Activated T-helper 1 cell treated with anti-CD3 and anti-CD28 coated beads, Interleukin-12 subunit alpha, Interleukin-12 subunit beta, Interleukin-2, Interleukin-4 antibody, amounts not matched to agents 30 ng/mL and 10 ng/mL and 1 ng/mL, durations not matched to agents 14 hours and 24 hours and 36 hours (primary cell): ENCODE measurements at regions of chr18 and their contacts with region 1.

Region 1: DNA sequence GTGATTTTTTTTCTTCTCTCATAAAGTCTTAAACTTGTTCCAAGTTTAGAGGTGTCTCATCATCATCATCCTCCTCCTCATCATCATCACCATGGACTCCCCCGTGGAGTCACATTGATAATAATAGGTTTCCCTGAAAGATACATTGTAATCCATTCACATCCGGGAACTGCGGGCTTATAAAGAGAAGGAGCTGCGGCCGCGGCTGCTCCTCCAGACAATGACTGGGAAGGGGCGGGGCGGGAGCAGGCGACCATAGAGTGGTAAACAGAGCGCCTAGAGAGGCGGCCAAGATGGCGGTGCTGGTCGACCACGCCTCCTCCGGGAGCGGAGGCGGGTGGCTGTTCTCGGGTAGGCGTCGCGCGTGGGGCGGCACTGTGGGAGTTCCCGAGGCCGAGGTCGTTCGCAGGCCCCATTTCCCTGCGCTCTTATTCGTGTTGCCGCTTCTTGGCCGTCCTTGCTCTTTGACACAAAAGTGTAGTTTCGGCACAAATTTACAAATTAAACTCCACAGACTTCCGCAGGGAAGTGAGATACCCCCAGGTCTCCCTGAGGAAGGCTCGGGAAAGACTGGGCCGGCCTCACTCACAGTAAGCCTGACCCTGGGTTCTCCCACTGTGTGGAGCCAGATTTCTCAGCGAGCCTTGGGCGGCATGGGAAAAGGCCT is 1.8 kb upstream of the TCF4 start:
- DNase-seq: peak; percentile 81
- H3K4me3 Mint-ChIP-seq: peak overlapping the region; percentile 83
- H3K27ac Mint-ChIP-seq: peak overlapping the region; percentile 76
- H3K4me1 Mint-ChIP-seq: peaks cover 35% of the 10 kb centered on the region
- H3K27me3 Mint-ChIP-seq: peaks cover 31% of the 10 kb centered on the region

Region 2: GRCh38 chr18:55234366-55235093 is 355.2 kb before region 1 on chr18:
- intact Hi-C with region 1: loop called (anchors 10 kb)
- DNase-seq: peak; percentile 41
- H3K4me3 Mint-ChIP-seq: no peak overlapping the region
- H3K27ac Mint-ChIP-seq: no peak overlapping the region
- H3K4me1 Mint-ChIP-seq: peaks cover 5% of the 10 kb centered on the region
- H3K27me3 Mint-ChIP-seq: no peaks in the 10 kb centered on the region

Region 3: DNA sequence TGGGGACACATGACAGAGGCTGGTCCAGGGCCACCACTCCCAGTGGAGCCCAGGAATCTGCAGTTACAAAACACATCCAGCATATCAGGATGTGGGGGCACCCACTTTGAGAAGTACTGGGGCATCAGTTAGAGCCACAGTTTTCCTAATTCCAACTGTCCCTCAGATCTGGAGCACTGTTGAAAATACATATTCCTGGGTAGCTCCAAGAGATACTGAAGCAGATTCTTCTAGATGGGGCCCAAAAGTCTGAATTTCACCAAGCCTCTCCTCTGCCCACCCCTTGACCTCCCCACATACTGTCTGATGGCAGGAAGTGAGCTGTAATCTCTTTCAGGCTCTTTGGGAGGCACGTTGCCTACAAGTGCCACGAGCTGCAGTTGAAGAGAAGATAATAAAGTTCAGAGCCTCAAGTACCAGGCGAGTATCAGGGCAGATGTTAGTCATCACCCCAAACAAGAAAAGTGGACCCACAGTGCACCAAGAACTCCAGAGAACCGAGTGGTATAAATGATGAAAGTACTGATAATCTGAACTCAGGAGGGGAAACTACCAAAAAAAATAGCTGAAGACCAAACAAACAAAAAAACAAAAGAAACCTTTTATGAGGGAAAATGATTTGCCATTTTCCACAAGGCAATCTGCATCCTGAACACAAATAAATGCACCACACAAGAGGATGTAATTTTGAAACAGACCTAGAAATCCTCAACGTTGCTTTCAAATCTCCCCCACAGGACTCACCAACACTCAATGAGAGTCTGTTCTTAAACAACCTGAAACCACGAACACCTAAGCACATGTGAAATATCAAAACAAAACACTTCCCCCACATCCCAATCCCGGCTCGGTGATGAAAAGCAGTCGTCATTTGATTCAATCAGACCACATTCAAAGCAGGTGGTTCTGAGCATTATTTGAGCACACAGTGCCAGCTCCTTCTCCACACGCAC is 100.4 kb before region 1 on chr18:
- intact Hi-C with region 1: loop called (anchors 1 kb)
- DNase-seq: no peak
- H3K4me3 Mint-ChIP-seq: no peak overlapping the region
- H3K27ac Mint-ChIP-seq: peak overlapping the region; percentile 41
- H3K4me1 Mint-ChIP-seq: peaks cover 9% of the 10 kb centered on the region
- H3K27me3 Mint-ChIP-seq: peaks cover 23% of the 10 kb centered on the region

Region 4: GRCh38 chr18:55522011-55522410 is 67.7 kb before region 1 on chr18:
- intact Hi-C with region 1: no loop called
- DNase-seq: no peak
- H3K4me3 Mint-ChIP-seq: no peak overlapping the region
- H3K27ac Mint-ChIP-seq: no peak overlapping the region
- H3K4me1 Mint-ChIP-seq: no peaks in the 10 kb centered on the region
- H3K27me3 Mint-ChIP-seq: peaks cover 5% of the 10 kb centered on the region

Region 5: DNA sequence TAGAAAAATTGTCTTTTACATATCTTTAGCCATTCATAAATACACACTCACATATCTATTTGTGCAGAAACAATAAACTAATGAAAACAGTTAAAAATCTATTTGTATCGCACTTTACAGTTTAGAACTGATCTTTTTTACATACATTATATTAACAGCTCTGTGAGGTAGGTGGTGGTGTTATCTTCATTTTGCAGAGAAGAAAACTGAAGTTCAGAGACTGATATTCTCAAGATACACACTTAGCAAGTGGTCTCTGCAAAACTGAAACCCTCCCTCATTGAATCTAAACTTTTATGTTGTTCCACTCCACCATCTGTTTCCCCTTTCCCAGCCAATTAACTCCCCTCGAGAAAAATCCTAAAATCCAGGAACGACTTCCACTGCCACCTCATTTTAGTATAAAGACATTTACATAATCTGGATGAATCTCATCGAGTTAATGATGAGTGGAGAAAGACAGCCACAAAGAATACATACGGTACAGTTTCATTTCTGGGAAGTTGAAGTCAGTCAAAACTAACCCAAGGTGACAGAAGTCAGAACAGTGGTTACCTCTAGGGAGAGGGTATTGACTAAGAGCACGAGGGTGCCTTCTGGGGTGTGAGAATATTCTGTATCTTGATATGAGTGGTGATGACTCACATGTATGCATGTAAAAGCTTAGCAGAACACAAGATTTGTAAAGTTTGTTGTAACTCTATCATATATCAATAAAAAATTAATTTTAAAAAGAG is 522.4 kb after region 1 on chr18:
- intact Hi-C with region 1: loop called (anchors 10 kb)
- DNase-seq: peak; percentile 1
- H3K4me3 Mint-ChIP-seq: no peak overlapping the region
- H3K27ac Mint-ChIP-seq: peak overlapping the region; percentile 20
- H3K4me1 Mint-ChIP-seq: peaks cover 13% of the 10 kb centered on the region
- H3K27me3 Mint-ChIP-seq: peaks cover 4% of the 10 kb centered on the region

Region 6: DNA sequence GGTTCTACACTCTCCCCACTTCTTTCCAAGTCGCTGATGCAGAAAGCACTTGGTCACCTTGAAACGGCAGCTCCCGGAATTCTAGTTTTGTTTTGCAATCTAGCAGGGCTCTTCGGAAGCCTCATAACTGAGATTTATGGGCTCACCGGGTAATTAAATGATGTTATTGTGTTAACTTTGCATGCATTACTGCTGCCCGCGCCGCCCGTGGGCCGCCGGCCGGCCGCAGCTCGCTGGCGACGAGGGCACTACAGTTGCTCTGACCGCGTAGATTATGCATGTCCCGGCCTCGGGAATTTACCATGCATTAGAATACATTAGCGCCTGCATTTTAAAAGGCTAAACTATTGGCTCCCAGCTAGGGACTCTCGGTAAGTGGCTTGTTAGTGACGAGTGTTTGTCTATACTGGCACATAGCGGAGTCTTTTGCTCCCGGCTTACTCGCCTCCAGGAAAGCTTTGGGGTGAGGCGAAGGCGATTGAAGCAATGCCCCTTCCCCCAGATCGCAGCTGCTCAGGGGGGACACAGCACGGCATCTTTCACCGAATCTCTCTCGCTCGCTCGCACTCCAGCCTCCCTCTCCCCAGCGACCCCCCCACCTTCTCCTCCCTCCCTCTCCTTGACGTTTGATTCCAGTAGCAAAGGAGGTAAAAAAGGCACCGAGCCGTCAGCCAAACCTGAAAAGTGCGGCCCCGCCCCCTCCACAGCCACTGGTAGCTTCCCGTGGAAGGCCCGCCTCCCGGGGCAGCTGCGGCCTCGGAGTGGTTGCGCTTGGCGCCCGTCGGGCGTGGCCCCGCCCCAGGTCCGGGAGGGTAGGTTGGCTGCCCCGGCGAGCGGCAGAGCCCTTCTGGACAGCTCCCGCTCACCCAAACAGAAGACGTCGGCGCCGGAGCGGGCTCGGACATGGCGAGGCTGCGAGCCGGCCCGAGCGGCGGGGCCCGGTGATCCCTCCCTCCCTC is 1845.1 kb after region 1 on chr18 and contains the start of gene ONECUT2:
- intact Hi-C with region 1: loop called (anchors 10 kb)
- DNase-seq: peak; percentile 23
- H3K4me3 Mint-ChIP-seq: no peak within 1 kb of the TSS
- H3K27ac Mint-ChIP-seq: peak within 1 kb of the TSS; percentile 63
- H3K4me1 Mint-ChIP-seq: peaks cover 9% of the 10 kb centered on the region
- H3K27me3 Mint-ChIP-seq: peaks cover 82% of the 10 kb centered on the region
- total RNA-seq, gene ONECUT2: under 0.01 TPM in 1 of 2 replicates, not detected in the other